ENCODE measurements at regions of chr3 and their contacts with region 1.

Region 1: GRCh38 chr3:180661444-180661843 is 17.8 kb downstream of the CCDC39 start:
- DNase-seq: no peak
- ATAC-seq: no peak
- H3K4me3 ChIP-seq: no peak overlapping the region
- H3K4me3 Mint-ChIP-seq: no peak overlapping the region
- H3K27ac ChIP-seq: no peak overlapping the region
- H3K27ac Mint-ChIP-seq: no peak overlapping the region
- H3K4me1 ChIP-seq: no peaks in the 10 kb centered on the region
- H3K4me1 Mint-ChIP-seq: no peaks in the 10 kb centered on the region
- H3K27me3 ChIP-seq: no peaks in the 10 kb centered on the region
- H3K27me3 Mint-ChIP-seq: peaks cover 7 to 9% of the 10 kb centered on the region in 2 donors

Region 2: GRCh38 chr3:179768080-179768479 is 893.4 kb before region 1 on chr3:
- CTCF ChIA-PET with region 1: interaction called in 1 of 2 experiments, 11 read pairs
- POLR2A ChIA-PET with region 1: no interaction called
- DNase-seq: no peak
- ATAC-seq: no peak
- H3K4me3 ChIP-seq: no peak overlapping the region
- H3K4me3 Mint-ChIP-seq: no peak overlapping the region
- H3K27ac ChIP-seq: no peak overlapping the region
- H3K27ac Mint-ChIP-seq: no peak overlapping the region
- H3K4me1 ChIP-seq: peaks cover 0 to 2% of the 10 kb centered on the region in 2 experiments
- H3K4me1 Mint-ChIP-seq: peaks cover 0 to 3% (median 0%) of the 10 kb centered on the region in 3 donors
- H3K27me3 ChIP-seq: no peaks in the 10 kb centered on the region
- H3K27me3 Mint-ChIP-seq: no peaks in the 10 kb centered on the region

Region 3: DNA sequence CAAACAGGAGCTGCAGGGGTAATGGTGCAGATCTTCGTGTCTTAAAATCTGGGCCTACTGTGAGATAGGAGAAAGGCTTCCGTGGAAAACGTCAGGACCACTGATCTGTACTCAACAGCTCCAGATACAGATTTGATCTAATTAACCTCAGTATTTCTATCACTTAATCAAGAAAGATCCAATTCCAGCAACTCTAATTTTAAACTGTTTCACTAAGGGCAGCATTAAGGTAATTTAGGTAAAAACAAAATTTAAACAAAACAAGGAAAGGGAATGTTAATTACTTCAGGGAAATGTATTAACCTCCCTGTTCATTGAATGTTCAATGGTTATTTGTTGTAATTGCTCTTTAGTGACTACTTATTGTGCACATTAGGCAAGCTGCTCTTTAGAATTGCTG is 85.9 kb before region 1 on chr3:
- CTCF ChIA-PET with region 1: no interaction called
- POLR2A ChIA-PET with region 1: no interaction called
- DNase-seq: no peak
- ATAC-seq: no peak
- H3K4me3 ChIP-seq: no peak overlapping the region
- H3K4me3 Mint-ChIP-seq: no peak overlapping the region
- H3K27ac ChIP-seq: no peak overlapping the region
- H3K27ac Mint-ChIP-seq: no peak overlapping the region
- H3K4me1 ChIP-seq: no peaks in the 10 kb centered on the region
- H3K4me1 Mint-ChIP-seq: no peaks in the 10 kb centered on the region
- H3K27me3 ChIP-seq: no peaks in the 10 kb centered on the region
- H3K27me3 Mint-ChIP-seq: peaks cover 4 to 12% of the 10 kb centered on the region in 2 donors

Region 4: DNA sequence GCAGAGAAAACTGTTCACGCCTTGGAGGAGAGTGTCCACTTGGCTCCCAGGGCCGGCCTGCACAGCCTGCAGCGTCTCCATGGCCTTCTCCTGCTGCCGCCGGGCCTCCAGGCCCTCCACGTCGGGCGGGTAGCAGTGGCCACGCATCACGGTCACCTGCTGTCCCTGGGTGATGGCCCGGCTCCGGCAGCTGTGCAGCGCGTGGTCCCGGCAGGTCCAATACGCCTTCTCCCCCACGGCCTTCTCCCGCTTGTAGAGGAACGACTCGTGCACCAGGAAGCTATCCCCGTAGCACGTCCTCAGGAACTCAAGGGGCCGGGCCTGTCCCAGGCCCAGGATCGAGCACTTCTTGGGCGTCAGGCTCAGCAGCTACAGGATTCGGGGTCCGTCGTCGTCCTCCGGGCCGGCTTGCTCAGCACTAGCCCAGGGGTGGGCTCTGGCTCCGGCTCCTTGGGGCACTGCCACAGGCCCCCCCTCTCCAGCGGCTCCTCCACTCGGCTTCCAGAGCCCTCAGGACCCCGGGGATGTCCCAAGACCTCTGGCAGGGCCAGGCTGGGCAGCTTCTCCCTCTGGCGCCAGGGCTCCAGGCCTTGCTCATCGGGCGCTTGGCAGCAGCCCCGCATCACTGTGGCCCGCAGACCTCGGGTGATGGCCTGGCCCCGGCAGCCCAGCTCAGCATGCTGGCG is 167.4 kb after region 1 on chr3:
- CTCF ChIA-PET with region 1: no interaction called
- POLR2A ChIA-PET with region 1: no interaction called
- DNase-seq: no peak
- ATAC-seq: no peak
- H3K4me3 ChIP-seq: no peak overlapping the region
- H3K4me3 Mint-ChIP-seq: no peak overlapping the region
- H3K27ac ChIP-seq: no peak overlapping the region
- H3K27ac Mint-ChIP-seq: no peak overlapping the region
- H3K4me1 ChIP-seq: no peaks in the 10 kb centered on the region
- H3K4me1 Mint-ChIP-seq: no peaks in the 10 kb centered on the region
- H3K27me3 ChIP-seq: peaks cover 0 to 7% of the 10 kb centered on the region in 2 experiments
- H3K27me3 Mint-ChIP-seq: no peaks in the 10 kb centered on the region